Astrocyte of the cerebellum (primary cell): ENCODE measurements at regions of chr14 and their contacts with region 1.

Region 1: GRCh38 chr14:32826404-32827082 is 112.1 kb upstream of the NPAS3 start:
- DNase-seq: no peak
- H3K4me3 ChIP-seq: no peak overlapping the region
- CTCF ChIP-seq: no peak

Region 2: GRCh38 chr14:32710731-32711680 is 115.5 kb before region 1 on chr14:
- in situ Hi-C with region 1: loop called (anchors 10 kb)
- DNase-seq: peak; percentile 42
- H3K4me3 ChIP-seq: no peak overlapping the region
- CTCF ChIP-seq: peak; percentile 42

Region 3: DNA sequence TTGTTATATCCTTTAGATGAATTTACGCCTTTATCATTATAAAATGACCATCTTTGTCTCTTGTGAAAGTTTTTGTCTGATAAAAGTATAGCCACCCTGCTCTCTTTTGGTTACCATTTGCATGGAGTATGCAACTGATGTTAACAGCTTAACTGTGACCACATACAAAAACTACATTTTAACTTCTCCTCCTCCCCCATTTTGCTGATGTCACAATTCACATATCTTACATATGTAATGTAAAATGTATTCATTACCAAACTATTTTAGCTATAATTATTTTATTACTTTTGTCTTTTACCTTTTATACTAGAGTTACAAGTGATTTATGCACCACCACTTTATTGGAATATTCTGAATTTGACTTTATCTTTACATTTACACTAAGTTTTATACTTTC is 72.3 kb before region 1 on chr14:
- in situ Hi-C with region 1: loop called (anchors 5 kb)
- DNase-seq: no peak
- H3K4me3 ChIP-seq: no peak overlapping the region
- CTCF ChIP-seq: no peak

Region 4: GRCh38 chr14:32913719-32914118 is 87.2 kb after region 1 on chr14:
- in situ Hi-C with region 1: loop called (anchors 10 kb)
- DNase-seq: no peak
- H3K4me3 ChIP-seq: no peak overlapping the region
- CTCF ChIP-seq: peak; percentile 62

Region 5: DNA sequence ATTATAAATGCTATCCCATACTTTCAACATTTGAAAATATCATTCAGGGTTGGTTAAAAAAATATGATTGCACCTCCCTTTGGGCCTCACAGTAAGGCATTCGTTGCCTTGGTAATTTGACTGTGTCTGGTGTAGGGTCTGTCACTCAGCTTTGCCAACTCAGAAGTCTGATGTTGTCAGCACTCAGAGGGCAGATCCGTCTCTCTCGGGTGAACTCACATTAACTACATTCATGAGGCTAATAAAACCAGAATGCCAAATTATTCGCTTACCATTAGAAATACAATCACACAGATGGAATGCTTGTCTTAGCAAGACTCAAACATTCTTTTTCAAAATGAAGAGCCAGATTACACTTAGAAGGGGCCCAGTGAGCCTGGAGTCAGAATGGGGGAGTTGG is 165.1 kb after region 1 on chr14:
- in situ Hi-C with region 1: no loop called
- DNase-seq: no peak
- H3K4me3 ChIP-seq: no peak overlapping the region
- CTCF ChIP-seq: no peak

Region 6: GRCh38 chr14:33564774-33565630 is 738.5 kb after region 1 on chr14:
- in situ Hi-C with region 1: loop called (anchors 10 kb)
- DNase-seq: peak; percentile 49
- H3K4me3 ChIP-seq: no peak overlapping the region
- CTCF ChIP-seq: no peak